H1 (cell line): ENCODE measurements at regions of chr6 and their contacts with region 1.

Region 1: GRCh38 chr6:85482905-85483700 is 33.2 kb downstream of the NT5E start:
- DNase-seq: peak; percentile 33 to 97
- H3K4me3 ChIP-seq: no peak overlapping the region
- H3K27ac ChIP-seq: no peak overlapping the region
- H3K4me1 ChIP-seq: no peaks in the 10 kb centered on the region
- H3K27me3 ChIP-seq: no peaks in the 10 kb centered on the region
- CTCF ChIP-seq: peak; percentile 86 to 96 (median 92)
- EP300 ChIP-seq: no peak
- POLR2A ChIP-seq: no peak
- RAD21 ChIP-seq: peak; percentile 88 to 93

Region 2: GRCh38 chr6:85354761-85355618 is 128.1 kb before region 1 on chr6:
- CTCF ChIA-PET with region 1: interaction called, 153 read pairs
- POLR2A ChIA-PET with region 1: no interaction called
- DNase-seq: peak; percentile 44 to 82
- H3K4me3 ChIP-seq: no peak overlapping the region
- H3K27ac ChIP-seq: no peak overlapping the region
- H3K4me1 ChIP-seq: no peaks in the 10 kb centered on the region
- H3K27me3 ChIP-seq: no peaks in the 10 kb centered on the region
- CTCF ChIP-seq: peak; percentile 86 to 92 (median 87)
- EP300 ChIP-seq: no peak
- POLR2A ChIP-seq: no peak
- RAD21 ChIP-seq: peak; percentile 91 to 93

Region 3: GRCh38 chr6:85372188-85372914 is 110.8 kb before region 1 on chr6:
- CTCF ChIA-PET with region 1: interaction called, 17 read pairs
- POLR2A ChIA-PET with region 1: interaction called, 3 read pairs
- DNase-seq: no peak
- H3K4me3 ChIP-seq: no peak overlapping the region
- H3K27ac ChIP-seq: no peak overlapping the region
- H3K4me1 ChIP-seq: no peaks in the 10 kb centered on the region
- H3K27me3 ChIP-seq: no peaks in the 10 kb centered on the region
- CTCF ChIP-seq: peak in 1 of 3 experiments; percentile 30; a peak in 2 of 4 replicates
- EP300 ChIP-seq: no peak
- POLR2A ChIP-seq: no peak
- RAD21 ChIP-seq: peak; percentile 31 to 42

Region 4: DNA sequence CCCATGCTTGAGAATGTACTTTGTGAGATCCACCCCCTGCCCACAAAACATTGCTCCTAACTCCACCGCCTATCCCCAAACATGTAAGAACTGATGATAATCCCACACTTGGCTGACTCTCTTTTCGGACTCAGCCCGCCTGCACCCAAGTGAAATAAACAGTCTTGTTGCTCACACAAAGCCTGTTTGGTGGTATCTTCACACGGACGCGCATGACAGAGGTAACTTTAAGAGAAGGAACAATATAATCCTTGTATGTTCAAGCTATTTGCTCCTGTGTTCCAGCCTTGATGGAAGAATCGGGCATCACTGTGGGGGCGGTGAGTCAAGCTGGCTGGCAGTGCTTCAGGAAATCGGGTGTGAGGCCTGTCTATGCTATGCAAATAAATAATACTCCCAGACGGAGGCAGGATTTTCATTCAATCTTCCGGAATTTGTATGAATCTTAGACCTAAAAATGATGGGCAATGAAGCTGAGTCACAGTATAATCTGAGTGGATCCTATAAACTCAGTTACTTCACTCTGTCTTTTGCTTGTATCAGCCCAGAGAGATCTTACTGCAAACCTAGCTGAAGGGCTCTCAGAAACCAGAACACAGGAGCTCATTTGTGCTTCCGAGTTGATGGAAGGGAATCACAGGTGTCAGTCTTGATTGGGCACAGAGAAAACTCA is 78.5 kb before region 1 on chr6:
- CTCF ChIA-PET with region 1: interaction called, 11 read pairs
- POLR2A ChIA-PET with region 1: no interaction called
- DNase-seq: no peak
- H3K4me3 ChIP-seq: no peak overlapping the region
- H3K27ac ChIP-seq: no peak overlapping the region
- H3K4me1 ChIP-seq: peaks cover 0 to 8% (median 4%) of the 10 kb centered on the region in 4 experiments; a peak in 3 of 7 replicates
- H3K27me3 ChIP-seq: no peaks in the 10 kb centered on the region; a peak in 1 of 7 replicates
- CTCF ChIP-seq: no peak
- EP300 ChIP-seq: no peak
- POLR2A ChIP-seq: no peak
- RAD21 ChIP-seq: no peak

Region 5: GRCh38 chr6:85460921-85461797 is 21.9 kb before region 1 on chr6:
- CTCF ChIA-PET with region 1: interaction called, 99 read pairs
- POLR2A ChIA-PET with region 1: interaction called, 3 read pairs
- DNase-seq: no peak
- H3K4me3 ChIP-seq: no peak overlapping the region
- H3K27ac ChIP-seq: no peak overlapping the region
- H3K4me1 ChIP-seq: peaks cover 0 to 10% (median 3%) of the 10 kb centered on the region in 4 experiments; a peak in 4 of 7 replicates
- H3K27me3 ChIP-seq: no peaks in the 10 kb centered on the region
- CTCF ChIP-seq: no peak
- EP300 ChIP-seq: no peak
- POLR2A ChIP-seq: no peak
- RAD21 ChIP-seq: no peak

Region 6: GRCh38 chr6:85498596-85499258 is 15.6 kb after region 1 on chr6:
- CTCF ChIA-PET with region 1: interaction called, 71 read pairs
- POLR2A ChIA-PET with region 1: interaction called, 3 read pairs
- DNase-seq: no peak
- H3K4me3 ChIP-seq: no peak overlapping the region
- H3K27ac ChIP-seq: no peak overlapping the region
- H3K4me1 ChIP-seq: no peaks in the 10 kb centered on the region
- H3K27me3 ChIP-seq: no peaks in the 10 kb centered on the region
- CTCF ChIP-seq: no peak
- EP300 ChIP-seq: no peak
- POLR2A ChIP-seq: no peak
- RAD21 ChIP-seq: no peak

Region 7: DNA sequence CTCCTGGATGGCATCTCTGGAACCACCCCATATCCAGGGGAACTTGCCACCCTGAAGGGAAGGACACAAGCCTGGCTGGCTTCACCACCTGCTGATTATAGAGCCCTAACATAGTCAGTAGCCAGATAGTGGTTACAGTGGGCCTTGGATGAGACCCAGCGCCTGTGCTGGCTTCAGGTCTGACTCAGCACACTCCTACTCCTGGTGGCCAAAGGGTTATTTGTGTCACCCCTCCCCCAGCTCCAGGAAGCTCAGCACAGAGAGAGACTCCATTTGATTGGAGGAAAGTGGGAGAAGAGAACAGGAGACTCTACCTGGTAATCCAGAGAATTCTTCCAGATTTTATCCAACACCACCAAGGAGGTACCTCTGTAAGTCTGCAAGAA is 97.8 kb after region 1 on chr6:
- CTCF ChIA-PET with region 1: no interaction called
- POLR2A ChIA-PET with region 1: no interaction called
- DNase-seq: no peak
- H3K4me3 ChIP-seq: no peak overlapping the region
- H3K27ac ChIP-seq: 0 out of 2 replicates have a peak overlapping the region, but pooled peaks have one; percentile 9
- H3K4me1 ChIP-seq: peaks cover 0 to 4% (median 2%) of the 10 kb centered on the region in 4 experiments; a peak in 3 of 7 replicates
- H3K27me3 ChIP-seq: no peaks in the 10 kb centered on the region
- CTCF ChIP-seq: peak in 1 of 3 experiments; percentile 8; a peak in 1 of 4 replicates
- EP300 ChIP-seq: no peak
- POLR2A ChIP-seq: no peak
- RAD21 ChIP-seq: no peak